A549 (cell line): ENCODE measurements at regions of chr10 and their contacts with region 1.

Region 1: DNA sequence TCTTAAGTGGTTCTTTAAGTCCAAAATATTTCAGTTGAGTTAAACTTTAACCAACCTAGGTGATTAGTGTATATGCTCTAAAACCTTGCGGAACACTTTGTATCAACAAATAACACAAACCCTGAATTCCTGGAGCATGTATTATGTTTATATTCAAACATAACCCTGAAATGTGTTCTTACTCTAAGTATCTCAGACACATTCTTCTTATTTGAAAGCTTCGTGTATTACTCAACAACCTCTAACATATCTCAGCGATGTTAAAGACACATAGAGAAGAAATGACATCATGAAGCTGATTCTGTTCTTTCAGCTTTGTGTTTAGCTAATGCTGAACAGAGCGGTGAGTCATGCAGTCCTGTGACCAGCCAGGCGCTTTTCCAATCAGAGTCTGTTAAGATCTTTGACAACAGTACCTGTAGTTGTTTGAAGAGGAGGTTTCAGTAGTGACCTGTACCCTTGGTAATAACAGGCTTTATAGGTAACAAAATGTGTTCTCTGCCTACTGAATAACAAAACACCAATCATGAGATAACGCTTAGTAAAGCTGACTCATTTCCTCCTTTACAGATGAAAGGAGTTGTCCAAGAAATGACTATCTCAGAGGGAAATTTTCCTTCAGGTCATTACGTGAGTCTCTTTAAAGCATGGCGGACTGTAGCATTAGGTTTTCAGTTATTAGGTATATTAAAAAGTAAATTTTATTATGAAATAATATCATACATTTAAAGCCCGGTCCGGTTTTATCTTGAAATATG is 67.3 kb upstream of the KLF6 start:
- DNase-seq: peak; percentile 94 to 97
- ATAC-seq: peak; percentile 93
- H3K4me3 ChIP-seq: 0 out of 3 replicates have a peak overlapping the region, but pooled peaks have one; percentile 10
- H3K27ac ChIP-seq: peak overlapping the region; percentile 92 to 94
- H3K4me1 ChIP-seq: peaks cover 52% of the 10 kb centered on the region
- CTCF ChIP-seq: no peak
- EP300 ChIP-seq: peak; percentile 87 to 90; a peak in 4 of 5 replicates
- POLR2A ChIP-seq: no peak
- RAD21 ChIP-seq: peak; percentile 20 to 66

Region 2: GRCh38 chr10:3776796-3777571 is 75.3 kb before region 1 on chr10:
- CTCF ChIA-PET with region 1: interaction called, 12 read pairs
- POLR2A ChIA-PET with region 1: interaction called, 10 read pairs
- DNase-seq: peak in 1 of 2 experiments; percentile 75
- ATAC-seq: 0 out of 6 replicates have a peak, but pooled peaks of 1 of the 2 experiments have one; percentile 30
- H3K4me3 ChIP-seq: no peak overlapping the region
- H3K27ac ChIP-seq: peak overlapping the region; percentile 50 to 67; a peak in 4 of 6 replicates
- H3K4me1 ChIP-seq: peaks cover 72% of the 10 kb centered on the region
- CTCF ChIP-seq: no peak
- EP300 ChIP-seq: peak; percentile 16 to 44; a peak in 2 of 5 replicates
- POLR2A ChIP-seq: no peak
- RAD21 ChIP-seq: peak in 1 of 2 experiments; percentile 34; a peak in 2 of 5 replicates

Region 3: GRCh38 chr10:3811291-3811870 is 40.9 kb before region 1 on chr10:
- CTCF ChIA-PET with region 1: interaction called, 4 read pairs
- POLR2A ChIA-PET with region 1: interaction called, 13 read pairs
- DNase-seq: no peak
- ATAC-seq: no peak
- H3K4me3 ChIP-seq: no peak overlapping the region
- H3K27ac ChIP-seq: peak overlapping the region; percentile 82 to 84
- H3K4me1 ChIP-seq: peaks cover 60% of the 10 kb centered on the region
- CTCF ChIP-seq: no peak
- EP300 ChIP-seq: no peak
- POLR2A ChIP-seq: no peak
- RAD21 ChIP-seq: no peak

Region 4: DNA sequence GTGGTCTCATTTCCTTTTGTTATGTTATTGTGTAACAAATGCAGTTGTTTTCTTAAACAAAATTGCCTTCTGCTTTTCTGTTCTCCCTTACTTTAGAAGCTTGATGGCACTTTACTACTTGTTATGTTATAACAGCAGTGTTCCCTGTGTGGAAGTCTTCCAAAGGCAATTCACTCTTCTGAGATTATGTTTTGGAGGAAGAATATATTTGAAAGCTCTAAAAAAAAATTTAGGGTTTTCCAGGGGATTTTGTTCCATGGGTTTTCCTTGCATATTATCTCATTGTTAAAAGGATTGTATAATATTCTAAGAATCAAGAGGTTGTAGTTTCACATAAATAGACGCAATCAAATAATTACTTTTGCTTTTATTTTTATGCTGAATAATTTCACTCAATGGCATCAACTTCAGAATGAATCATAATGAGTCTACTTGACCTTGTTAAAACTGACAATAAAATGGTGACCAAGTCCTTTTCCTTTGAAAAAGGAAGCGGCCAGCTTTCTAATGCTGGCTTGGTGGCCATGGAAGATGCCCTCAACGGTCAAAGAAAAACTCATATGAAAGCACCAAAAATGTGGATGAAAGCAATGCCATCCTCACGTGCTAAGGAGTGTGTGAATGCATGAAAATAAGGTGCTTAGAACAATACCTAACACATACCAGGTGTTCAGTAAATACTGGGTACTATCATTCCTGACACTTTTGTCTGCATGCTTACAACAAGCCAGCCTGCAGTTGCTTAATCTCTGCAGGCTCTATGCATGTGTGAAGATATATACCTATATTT is 25.1 kb after region 1 on chr10:
- CTCF ChIA-PET with region 1: no interaction called
- POLR2A ChIA-PET with region 1: no interaction called
- DNase-seq: no peak
- ATAC-seq: no peak
- H3K4me3 ChIP-seq: no peak overlapping the region
- H3K27ac ChIP-seq: peak overlapping the region in 1 of 2 experiments; percentile 36; a peak in 2 of 6 replicates
- H3K4me1 ChIP-seq: peaks cover 37% of the 10 kb centered on the region
- CTCF ChIP-seq: no peak
- EP300 ChIP-seq: no peak
- POLR2A ChIP-seq: no peak
- RAD21 ChIP-seq: no peak

Region 5: GRCh38 chr10:3887885-3888476 is 35.7 kb after region 1 on chr10:
- CTCF ChIA-PET with region 1: interaction called, 6 read pairs
- POLR2A ChIA-PET with region 1: interaction called, 20 read pairs
- DNase-seq: peak; percentile 47 to 83
- ATAC-seq: peak; percentile 51 to 77
- H3K4me3 ChIP-seq: no peak overlapping the region; the same call in 2 of the 3 replicates
- H3K27ac ChIP-seq: peak overlapping the region; percentile 95 to 96
- H3K4me1 ChIP-seq: peaks cover 59% of the 10 kb centered on the region
- CTCF ChIP-seq: no peak
- EP300 ChIP-seq: peak in 1 of 2 experiments; percentile 31; a peak in 2 of 5 replicates
- POLR2A ChIP-seq: no peak
- RAD21 ChIP-seq: 0 out of 5 replicates have a peak, but pooled peaks of 1 of the 2 experiments have one; percentile 28

Region 6: DNA sequence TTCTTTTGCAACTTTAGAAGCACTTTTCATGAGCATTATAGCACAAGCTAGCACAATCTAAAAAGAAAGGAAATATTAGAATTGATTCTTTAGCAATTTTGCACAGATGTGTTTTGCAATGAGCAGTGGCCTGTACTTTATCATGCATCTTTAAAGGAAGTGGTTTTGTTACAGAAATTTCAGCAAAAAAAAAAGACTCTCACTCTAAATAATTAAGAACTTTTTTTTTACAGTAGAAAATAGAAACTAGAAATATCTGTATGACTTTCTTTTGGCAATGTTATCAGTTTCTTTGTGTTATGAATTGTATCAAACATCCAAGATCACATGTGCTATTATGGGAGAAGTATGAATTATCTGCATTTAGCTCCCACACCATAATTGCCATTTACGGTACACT is 128.3 kb after region 1 on chr10:
- CTCF ChIA-PET with region 1: no interaction called
- POLR2A ChIA-PET with region 1: no interaction called
- DNase-seq: no peak
- ATAC-seq: no peak
- H3K4me3 ChIP-seq: no peak overlapping the region
- H3K27ac ChIP-seq: no peak overlapping the region
- H3K4me1 ChIP-seq: no peaks in the 10 kb centered on the region
- CTCF ChIP-seq: no peak
- EP300 ChIP-seq: no peak
- POLR2A ChIP-seq: no peak
- RAD21 ChIP-seq: no peak

Region 7: DNA sequence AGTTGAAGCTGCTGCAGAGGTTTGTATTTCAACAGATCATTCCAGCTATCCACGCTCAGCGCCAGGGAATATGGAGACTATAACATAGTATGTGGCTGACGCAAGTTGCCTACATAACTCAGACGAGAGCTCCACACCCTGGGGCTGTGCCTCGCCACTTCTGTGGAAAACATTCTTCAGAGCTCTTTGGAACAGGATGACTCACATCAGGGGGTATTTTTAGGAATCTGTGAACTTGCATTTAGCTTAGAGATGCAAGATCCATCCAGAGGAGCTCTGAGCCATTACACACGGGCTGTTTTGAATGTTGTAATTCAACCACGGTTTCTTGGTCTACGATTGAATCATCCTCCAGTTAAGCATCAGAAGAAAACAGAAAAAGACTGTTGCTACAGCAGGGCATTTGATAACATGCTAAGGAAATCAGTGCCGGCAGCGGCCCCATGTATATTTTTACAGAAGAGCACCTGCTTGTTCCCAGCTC is 492.2 kb after region 1 on chr10:
- CTCF ChIA-PET with region 1: no interaction called
- POLR2A ChIA-PET with region 1: interaction called, 10 read pairs
- DNase-seq: peak; percentile 69 to 92
- ATAC-seq: peak; percentile 99
- H3K4me3 ChIP-seq: 0 out of 3 replicates have a peak overlapping the region, but pooled peaks have one; percentile 14
- H3K27ac ChIP-seq: peak overlapping the region; percentile 80 to 88
- H3K4me1 ChIP-seq: peaks cover 23% of the 10 kb centered on the region
- CTCF ChIP-seq: no peak; the same call in 2 of the 3 replicates
- EP300 ChIP-seq: peak; percentile 64 to 82; a peak in 3 of 5 replicates
- POLR2A ChIP-seq: no peak
- RAD21 ChIP-seq: peak; percentile 30 to 73; a peak in 4 of 5 replicates